CD4-positive, alpha-beta T cell (primary cell): ENCODE measurements at regions of chr2 and their contacts with region 1.

Region 1: GRCh38 chr2:206274434-206275268 is at the start of gene ZDBF2:
- DNase-seq: peak in 13 of 14 experiments; percentile 12 to 77 (median 47)
- ATAC-seq: peak; percentile 67
- H3K4me3 ChIP-seq: peak within 1 kb of the TSS; percentile 65
- H3K4me3 Mint-ChIP-seq: peak within 1 kb of the TSS; percentile 92
- H3K27ac ChIP-seq: peak within 1 kb of the TSS in 1 of 2 donors; percentile 38
- H3K27ac Mint-ChIP-seq: peak within 1 kb of the TSS; percentile 89
- H3K4me1 ChIP-seq: peaks cover 15% of the 10 kb centered on the region
- H3K4me1 Mint-ChIP-seq: peaks cover 25% of the 10 kb centered on the region
- H3K27me3 ChIP-seq: peaks cover 36 to 37% of the 10 kb centered on the region in 2 experiments
- H3K27me3 Mint-ChIP-seq: peaks cover 71% of the 10 kb centered on the region
- CTCF ChIP-seq: no peak
- total RNA-seq, gene ZDBF2: 28.7 to 29.7 TPM

Region 2: DNA sequence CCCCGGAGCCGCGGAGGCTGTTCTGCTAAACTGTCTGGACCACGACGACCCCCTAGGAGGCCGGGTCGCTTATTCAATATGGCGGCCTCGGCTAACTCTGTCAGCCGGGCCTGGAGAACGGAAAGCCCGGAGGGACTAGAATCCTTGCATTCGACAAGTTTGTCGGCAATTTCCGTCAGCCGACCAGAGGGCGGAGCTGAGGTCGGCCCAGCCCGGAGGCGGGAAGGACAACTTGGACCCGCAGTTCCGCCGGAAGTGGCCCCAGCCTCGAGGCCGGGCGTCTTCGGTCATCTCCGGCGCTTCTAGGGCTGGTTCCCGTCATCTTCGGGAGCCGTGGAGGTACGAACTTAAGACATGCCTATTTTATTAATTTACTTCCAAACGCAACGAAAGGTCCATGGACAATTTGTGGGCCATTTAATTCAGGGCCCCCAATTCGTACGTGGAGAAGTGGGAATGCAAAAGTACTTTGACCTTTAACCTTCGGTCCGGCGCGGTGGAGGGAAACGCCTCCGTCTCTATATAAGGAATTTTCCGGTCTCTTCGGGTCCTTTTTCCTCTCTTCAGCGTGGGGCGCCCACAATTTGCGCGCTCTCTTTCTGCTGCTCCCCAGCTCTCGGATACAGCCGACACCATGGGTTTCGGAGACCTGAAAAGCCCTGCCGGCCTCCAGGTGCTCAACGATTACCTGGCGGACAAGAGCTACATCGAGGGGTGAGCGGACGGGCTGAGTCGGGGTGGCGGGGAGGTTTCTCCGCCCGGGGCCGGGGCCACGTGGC is 115.1 kb before region 1 on chr2 and contains the starts of genes EEF1B2 and NDUFS1:
- CTCF ChIA-PET with region 1: no interaction called
- POLR2A ChIA-PET with region 1: interaction called, 5 read pairs
- intact Hi-C with region 1: loop called (anchors 5 to 10 kb)
- DNase-seq: peak; percentile 91 to 99 (median 95)
- ATAC-seq: peak; percentile 82
- H3K4me3 ChIP-seq: peak within 1 kb of the TSS; percentile 82
- H3K4me3 Mint-ChIP-seq: peak within 1 kb of the TSS; percentile 99
- H3K27ac ChIP-seq: peak within 1 kb of the TSS; percentile 85 to 92
- H3K27ac Mint-ChIP-seq: peak within 1 kb of the TSS; percentile 97
- H3K4me1 ChIP-seq: peaks cover 39% of the 10 kb centered on the region
- H3K4me1 Mint-ChIP-seq: peaks cover 71% of the 10 kb centered on the region
- H3K27me3 ChIP-seq: no peaks in the 10 kb centered on the region
- H3K27me3 Mint-ChIP-seq: no peaks in the 10 kb centered on the region
- CTCF ChIP-seq: no peak
- total RNA-seq, gene EEF1B2: 1,109 to 1,132 TPM
- total RNA-seq, gene NDUFS1: 33.4 to 34.3 TPM